ENCODE measurements at regions of chr1 and their contacts with region 1.

Region 1: DNA sequence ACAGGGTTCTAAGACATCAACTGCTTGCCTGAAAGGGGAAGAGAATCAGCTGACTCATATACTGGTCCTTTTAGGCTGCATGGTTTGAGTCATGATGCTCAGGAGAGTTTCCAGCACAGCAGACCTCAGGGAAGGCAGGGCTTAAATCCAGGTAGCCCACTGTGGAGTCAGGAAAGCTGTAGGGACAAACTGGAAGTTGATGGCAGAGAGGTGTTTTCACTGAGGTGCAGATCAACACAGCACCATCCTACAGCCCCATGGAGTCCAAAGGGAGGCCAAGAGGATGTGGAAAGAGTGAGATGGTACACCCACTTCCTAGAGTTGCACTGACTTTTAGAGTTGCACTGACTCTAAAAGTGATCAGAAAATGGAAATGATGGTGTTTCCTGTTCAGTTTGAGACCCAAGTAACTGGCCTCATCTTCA is 252.4 kb upstream of the DUSP10 start:
- DNase-seq: peak; percentile 60
- H3K4me3 Mint-ChIP-seq: no peak overlapping the region
- H3K27ac Mint-ChIP-seq: peak overlapping the region; percentile 97
- H3K4me1 Mint-ChIP-seq: peaks cover 38% of the 10 kb centered on the region
- H3K27me3 Mint-ChIP-seq: peaks cover 2% of the 10 kb centered on the region

Region 2: GRCh38 chr1:221435504-221435904 is 558.8 kb before region 1 on chr1:
- CTCF ChIA-PET with region 1: no interaction called
- POLR2A ChIA-PET with region 1: no interaction called
- intact Hi-C with region 1: loop called (anchors 1 kb)
- DNase-seq: no peak
- H3K4me3 Mint-ChIP-seq: no peak overlapping the region
- H3K27ac Mint-ChIP-seq: no peak overlapping the region
- H3K4me1 Mint-ChIP-seq: peaks cover 30% of the 10 kb centered on the region
- H3K27me3 Mint-ChIP-seq: peaks cover 6% of the 10 kb centered on the region

Region 3: DNA sequence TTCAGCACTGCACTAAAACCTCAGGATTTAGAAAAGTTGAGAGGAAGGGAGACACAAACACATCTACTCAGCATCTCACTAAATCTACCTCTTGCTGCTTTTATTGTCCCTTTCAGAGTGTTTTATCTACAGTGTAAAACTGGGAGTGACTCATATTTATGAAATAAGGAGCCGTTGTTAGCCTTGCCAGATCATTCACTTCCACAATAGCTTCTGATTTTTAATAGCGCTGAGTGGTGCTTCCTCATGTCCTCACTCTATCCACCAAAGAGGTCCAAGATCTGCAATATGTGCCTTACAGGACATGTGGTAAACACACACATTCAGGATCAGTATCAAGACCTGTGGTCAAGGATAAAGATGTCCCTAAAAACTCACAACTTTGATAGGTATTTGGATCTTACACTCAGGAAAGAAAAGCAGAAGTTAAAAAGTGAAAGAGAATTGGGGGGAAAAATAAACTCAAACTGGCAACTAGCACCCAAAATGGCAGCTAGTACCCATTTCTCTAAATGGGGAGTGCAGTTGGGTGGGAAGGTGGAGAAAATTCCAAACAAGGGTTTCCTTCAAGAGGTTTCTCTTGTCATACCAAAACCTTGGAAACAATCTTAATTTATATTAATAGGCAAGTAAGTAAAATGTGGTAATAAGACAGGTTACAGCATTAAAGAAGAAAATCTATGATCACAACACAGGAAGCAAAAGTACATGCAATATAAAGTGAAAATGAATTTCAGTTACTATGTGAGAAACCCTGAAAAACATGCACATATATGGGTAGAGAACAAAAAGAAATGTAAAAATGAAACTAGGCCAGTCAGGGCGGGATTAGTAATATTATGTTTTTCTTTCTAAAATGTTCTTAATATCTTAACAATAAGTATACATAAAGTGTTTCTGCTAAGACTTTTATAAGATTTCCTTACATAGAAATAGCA is 268.3 kb before region 1 on chr1:
- CTCF ChIA-PET with region 1: no interaction called
- POLR2A ChIA-PET with region 1: no interaction called
- intact Hi-C with region 1: loop called (anchors 1 kb)
- DNase-seq: no peak
- H3K4me3 Mint-ChIP-seq: peak overlapping the region; percentile 59
- H3K27ac Mint-ChIP-seq: peak overlapping the region; percentile 96
- H3K4me1 Mint-ChIP-seq: peaks cover 80% of the 10 kb centered on the region
- H3K27me3 Mint-ChIP-seq: no peaks in the 10 kb centered on the region

Region 4: GRCh38 chr1:221794079-221794670 is 200.1 kb before region 1 on chr1:
- CTCF ChIA-PET with region 1: no interaction called
- POLR2A ChIA-PET with region 1: interaction called, 4 read pairs
- intact Hi-C with region 1: loop called (anchors 1 kb)
- DNase-seq: peak; percentile 56
- H3K4me3 Mint-ChIP-seq: no peak overlapping the region
- H3K27ac Mint-ChIP-seq: peak overlapping the region; percentile 84
- H3K4me1 Mint-ChIP-seq: peaks cover 41% of the 10 kb centered on the region
- H3K27me3 Mint-ChIP-seq: no peaks in the 10 kb centered on the region

Region 5: GRCh38 chr1:221878134-221878533 is 116.2 kb before region 1 on chr1:
- CTCF ChIA-PET with region 1: no interaction called
- POLR2A ChIA-PET with region 1: no interaction called
- intact Hi-C with region 1: loop called (anchors 1 kb)
- DNase-seq: no peak
- H3K4me3 Mint-ChIP-seq: no peak overlapping the region
- H3K27ac Mint-ChIP-seq: no peak overlapping the region
- H3K4me1 Mint-ChIP-seq: peaks cover 8% of the 10 kb centered on the region
- H3K27me3 Mint-ChIP-seq: peaks cover 8% of the 10 kb centered on the region

Region 6: DNA sequence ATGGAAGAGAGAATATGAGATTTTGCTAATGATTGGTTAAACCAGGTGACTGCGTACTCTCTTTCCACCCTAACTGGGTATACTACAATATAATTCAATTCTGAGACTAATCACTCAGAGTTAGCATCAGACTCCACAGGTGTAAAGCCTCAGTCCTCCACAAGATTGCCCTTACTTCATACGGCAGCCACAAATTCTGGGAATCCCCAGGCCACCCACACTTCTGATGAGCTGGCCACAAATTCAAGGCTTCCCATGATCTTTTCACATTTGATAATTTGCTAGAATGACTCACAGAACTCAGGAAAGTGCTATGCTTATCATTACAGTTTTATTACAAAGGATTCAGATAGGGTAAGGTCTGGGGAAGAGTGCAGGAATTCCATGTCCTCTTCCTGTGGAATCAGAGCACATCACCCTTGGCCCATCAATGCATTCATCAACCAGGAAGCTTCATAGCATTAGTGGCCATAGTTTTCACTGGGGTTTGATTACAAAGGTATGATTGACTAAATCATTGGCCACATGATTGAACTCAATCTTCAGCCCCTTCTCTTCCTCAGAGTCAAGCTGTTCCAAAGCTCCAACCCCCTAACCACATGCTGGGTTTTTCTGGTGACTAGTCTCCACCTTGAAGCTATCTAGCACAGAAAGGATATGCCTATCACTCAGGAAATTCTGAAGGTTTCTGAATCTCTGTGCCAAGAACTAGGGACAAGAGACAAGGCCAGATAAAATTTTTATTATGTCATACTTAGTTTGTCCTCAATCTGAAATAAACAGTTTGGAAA is 421.9 kb after region 1 on chr1:
- CTCF ChIA-PET with region 1: no interaction called
- POLR2A ChIA-PET with region 1: no interaction called
- intact Hi-C with region 1: loop called (anchors 1 kb)
- DNase-seq: peak; percentile 65
- H3K4me3 Mint-ChIP-seq: no peak overlapping the region
- H3K27ac Mint-ChIP-seq: no peak overlapping the region
- H3K4me1 Mint-ChIP-seq: peaks cover 57% of the 10 kb centered on the region
- H3K27me3 Mint-ChIP-seq: no peaks in the 10 kb centered on the region

Measured in activated CD4-positive, alpha-beta memory T cell treated with anti-CD3 and anti-CD28 coated beads for 36 hours (primary cell).